MCF 10A (cell line): ENCODE measurements at regions of chr5 and their contacts with region 1.

Region 1: DNA sequence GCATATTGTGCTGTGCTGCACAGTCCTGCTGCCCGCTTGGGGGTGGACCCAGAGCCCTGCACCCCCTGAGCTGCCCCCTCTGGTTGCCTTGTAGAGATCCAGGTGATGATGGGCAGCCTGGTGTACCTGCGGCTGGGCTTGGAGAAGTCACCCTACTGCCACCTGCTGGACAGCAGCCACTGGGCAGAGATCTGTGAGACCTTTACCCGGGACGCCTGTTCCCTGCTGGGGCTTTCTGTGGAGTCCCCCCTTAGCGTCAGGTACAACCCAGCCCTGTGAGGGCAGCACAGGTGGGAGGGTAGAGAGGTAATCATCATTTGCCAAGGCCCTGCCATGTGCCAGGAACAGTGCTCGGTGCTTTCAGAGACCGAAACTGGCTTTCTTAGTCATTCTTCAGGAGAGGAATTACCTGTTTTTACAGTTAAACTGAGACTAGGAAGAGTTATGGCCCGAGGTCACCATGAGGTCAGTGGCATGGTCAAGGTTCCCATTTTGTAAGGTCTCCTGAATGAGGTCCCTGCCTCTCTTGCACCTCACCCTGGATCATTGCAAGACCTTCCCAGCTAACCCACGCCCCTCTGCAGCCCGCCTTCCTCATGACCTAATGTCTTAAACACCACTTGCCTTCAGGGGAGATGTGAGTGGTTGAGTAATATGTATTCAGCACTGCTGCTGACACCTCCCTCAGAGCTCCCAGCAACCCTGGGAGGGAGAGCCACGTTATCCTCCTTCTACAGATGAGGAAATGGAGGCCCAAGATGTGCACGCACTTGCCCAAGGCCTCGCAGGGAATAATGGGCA is 7.5 kb downstream of the NHP2 start:
- DNase-seq: peak; percentile 85
- H3K4me3 Mint-ChIP-seq: no peak overlapping the region
- H3K27ac Mint-ChIP-seq: peak overlapping the region; percentile 37
- H3K4me1 Mint-ChIP-seq: peaks cover 24% of the 10 kb centered on the region
- H3K27me3 Mint-ChIP-seq: no peaks in the 10 kb centered on the region
- CTCF ChIP-seq: peak; percentile 93

Region 2: DNA sequence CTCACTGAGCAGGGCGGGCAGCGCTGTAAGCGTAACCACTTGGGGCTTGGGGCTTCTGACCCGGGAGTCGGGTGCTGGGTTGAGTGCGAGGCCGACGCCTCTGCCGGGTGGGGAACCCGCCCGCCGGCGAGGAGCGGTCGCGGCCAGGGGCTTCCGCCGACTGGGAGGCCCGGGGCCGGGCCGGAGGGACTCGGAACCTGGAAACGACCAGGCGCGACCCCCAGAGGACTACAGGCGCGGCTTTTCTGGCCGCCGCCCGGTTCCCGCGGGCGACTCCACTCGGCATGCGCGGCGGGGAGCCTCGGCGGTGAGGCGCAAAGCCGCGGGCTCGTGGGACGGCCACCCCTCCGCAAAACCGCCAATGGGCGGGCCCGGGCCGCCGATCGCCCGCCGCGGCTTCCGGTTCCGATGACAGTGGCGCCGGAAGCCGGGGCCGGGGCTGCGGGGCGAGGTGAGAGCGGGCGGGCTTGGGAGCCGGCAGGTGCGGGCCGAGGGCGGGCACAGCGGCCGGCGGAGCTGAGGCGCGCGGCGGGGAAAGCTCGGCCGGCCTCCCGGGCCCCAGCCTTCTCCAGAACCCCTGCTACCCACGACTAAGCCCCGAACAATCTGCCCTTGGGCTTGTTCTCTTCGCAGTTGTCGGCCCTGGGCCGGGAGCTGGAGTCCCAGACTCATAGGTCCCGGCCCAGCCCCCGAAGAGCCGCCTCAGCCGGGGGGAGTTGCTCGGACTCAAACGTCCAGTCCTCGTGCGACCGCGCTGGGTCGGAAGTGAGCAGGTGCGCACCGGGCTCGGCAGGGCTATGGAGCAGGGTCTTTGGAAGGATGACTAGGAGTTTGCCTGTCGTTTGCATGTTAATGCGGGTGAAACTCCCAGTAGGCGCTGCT is 15.4 kb before region 1 on chr5 and contains the start of gene RMND5B:
- CTCF ChIA-PET with region 1: interaction called, 101 read pairs
- POLR2A ChIA-PET with region 1: interaction called, 15 read pairs
- intact Hi-C with region 1: no loop called
- DNase-seq: peak; percentile 80
- H3K4me3 Mint-ChIP-seq: peak within 1 kb of the TSS; percentile 74
- H3K27ac Mint-ChIP-seq: peak within 1 kb of the TSS; percentile 81
- H3K4me1 Mint-ChIP-seq: peaks cover 18% of the 10 kb centered on the region
- H3K27me3 Mint-ChIP-seq: no peaks in the 10 kb centered on the region
- CTCF ChIP-seq: no peak
- total RNA-seq, gene RMND5B: 53.0 and 56.5 TPM in 2 replicates

Region 3: GRCh38 chr5:178163772-178164735 is 17.8 kb after region 1 on chr5:
- CTCF ChIA-PET with region 1: interaction called, 12 read pairs
- POLR2A ChIA-PET with region 1: no interaction called
- intact Hi-C with region 1: no loop called
- DNase-seq: peak; percentile 88
- H3K4me3 Mint-ChIP-seq: peak overlapping the region; percentile 8
- H3K27ac Mint-ChIP-seq: no peak overlapping the region
- H3K4me1 Mint-ChIP-seq: no peaks in the 10 kb centered on the region
- H3K27me3 Mint-ChIP-seq: peaks cover 33% of the 10 kb centered on the region
- CTCF ChIP-seq: peak; percentile 100

Region 4: GRCh38 chr5:178706591-178706990 is 560.4 kb after region 1 on chr5:
- CTCF ChIA-PET with region 1: no interaction called
- POLR2A ChIA-PET with region 1: no interaction called
- intact Hi-C with region 1: no loop called
- DNase-seq: no peak
- H3K4me3 Mint-ChIP-seq: no peak overlapping the region
- H3K27ac Mint-ChIP-seq: no peak overlapping the region
- H3K4me1 Mint-ChIP-seq: no peaks in the 10 kb centered on the region
- H3K27me3 Mint-ChIP-seq: no peaks in the 10 kb centered on the region
- CTCF ChIP-seq: no peak